ENCODE measurements at regions of chr5 and their contacts with region 1.

Region 1: DNA sequence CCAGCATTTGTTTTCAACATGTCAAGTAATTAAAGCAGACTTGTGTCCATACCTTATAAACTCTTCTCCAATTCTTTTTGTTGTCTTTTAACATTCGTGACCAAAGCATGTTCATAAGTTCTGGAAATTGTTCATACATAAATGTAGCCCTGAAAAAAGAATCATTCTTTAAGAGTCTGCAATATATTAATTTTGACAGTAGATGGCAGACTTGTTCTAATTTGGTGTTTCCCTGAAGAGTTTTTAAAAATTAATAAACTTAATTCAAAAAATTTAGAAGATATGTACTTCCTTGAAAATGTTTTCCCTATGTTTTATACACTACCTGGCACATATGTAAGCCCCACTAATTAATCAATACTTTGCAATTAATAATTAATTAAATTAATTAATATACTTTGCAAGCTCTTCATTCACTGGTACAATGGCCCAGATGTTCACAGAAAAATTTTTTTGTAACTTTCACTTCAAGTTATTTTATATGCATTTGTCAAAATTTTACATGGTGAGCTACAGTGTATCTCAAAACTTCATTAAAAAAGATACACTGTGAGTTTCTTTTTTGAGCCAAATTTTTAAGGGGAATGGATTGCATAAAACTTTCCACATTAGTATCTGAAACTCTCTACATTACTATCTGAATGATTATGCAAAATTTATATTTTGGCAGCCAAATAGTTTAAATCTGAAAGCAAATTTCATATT is 42.1 kb downstream of the CLINT1 start:
- DNase-seq: no peak
- H3K4me3 ChIP-seq: no peak overlapping the region
- CTCF ChIP-seq: no peak
- POLR2A ChIP-seq: no peak

Region 2: DNA sequence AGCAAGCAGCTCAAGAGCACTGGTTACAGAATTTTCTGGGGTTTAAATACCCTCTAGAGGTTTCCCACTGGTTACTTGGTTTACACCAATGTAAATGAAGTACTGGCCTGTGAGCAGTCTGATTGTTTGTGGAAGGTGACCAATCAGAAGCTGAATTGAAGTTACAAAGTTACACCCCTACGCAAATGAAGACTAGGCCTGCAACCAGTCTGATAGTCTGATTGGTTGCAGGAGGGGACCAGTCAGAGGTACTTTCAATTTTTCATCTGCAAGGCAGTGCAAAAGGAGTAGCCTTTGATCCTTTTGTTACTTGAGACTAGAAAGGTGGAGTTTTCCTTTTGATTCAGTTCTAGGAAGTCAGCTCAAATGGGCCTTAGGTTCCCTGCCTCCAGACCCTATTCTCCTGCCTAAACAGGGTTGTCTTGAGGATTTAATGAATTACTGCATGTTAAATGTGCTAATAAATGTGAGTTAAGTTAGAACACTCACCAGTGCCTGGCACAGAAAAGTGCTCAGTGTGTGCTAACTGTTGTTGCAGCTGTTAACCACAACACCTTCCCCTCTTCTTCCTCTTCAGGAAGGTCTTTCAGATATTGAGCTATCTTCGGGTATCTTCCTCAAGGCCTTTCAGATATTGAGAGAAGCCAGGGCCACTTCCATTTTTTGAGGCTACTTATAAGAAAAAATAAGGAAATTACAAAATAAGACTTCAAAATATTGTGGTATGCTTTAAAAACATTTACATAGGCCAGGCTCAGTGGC is 74.2 kb after region 1 on chr5:
- intact Hi-C with region 1: no loop called
- DNase-seq: no peak
- H3K4me3 ChIP-seq: no peak overlapping the region
- CTCF ChIP-seq: no peak
- POLR2A ChIP-seq: no peak

Region 3: DNA sequence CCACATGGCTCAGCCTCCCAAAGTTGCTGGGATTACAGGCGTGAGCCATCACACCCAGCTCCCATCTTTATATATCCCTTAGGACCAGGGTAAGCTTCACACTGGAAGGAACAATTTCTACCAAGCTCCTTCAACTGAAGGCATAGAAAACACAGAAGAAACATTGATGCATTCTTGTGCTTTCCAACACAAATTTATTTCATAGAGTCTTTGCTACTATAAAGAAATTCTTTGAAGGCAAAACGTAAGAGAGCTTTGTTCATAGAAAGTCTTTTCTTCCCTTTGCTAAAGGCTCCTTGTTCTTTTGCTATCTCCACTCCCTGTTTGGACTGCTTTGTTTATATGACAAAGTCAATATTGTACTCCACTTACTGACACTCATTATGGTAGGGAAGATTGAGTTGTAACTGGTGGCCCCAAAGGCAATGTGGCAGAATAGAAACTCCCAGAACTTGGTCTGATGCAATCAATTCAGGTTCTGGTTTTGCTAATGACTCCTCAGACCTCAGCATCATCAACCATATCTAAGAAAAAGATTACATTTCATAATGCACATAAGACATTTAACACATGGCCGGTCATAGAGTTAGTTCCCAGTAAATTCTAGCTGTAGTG is 139.5 kb after region 1 on chr5:
- intact Hi-C with region 1: loop called (anchors 10 kb)
- DNase-seq: no peak
- H3K4me3 ChIP-seq: no peak overlapping the region
- CTCF ChIP-seq: no peak
- POLR2A ChIP-seq: no peak

Region 4: GRCh38 chr5:158174918-158175851 is 358.4 kb after region 1 on chr5:
- intact Hi-C with region 1: no loop called
- DNase-seq: peak; percentile 70 to 89
- H3K4me3 ChIP-seq: no peak overlapping the region
- CTCF ChIP-seq: peak in 1 of 3 donors; percentile 58
- POLR2A ChIP-seq: no peak